Activated CD4-positive, alpha-beta T cell treated with anti-CD3 and anti-CD28 coated beads for 36 hours (primary cell): ENCODE measurements at regions of chr17 and their contacts with region 1.

Region 1: DNA sequence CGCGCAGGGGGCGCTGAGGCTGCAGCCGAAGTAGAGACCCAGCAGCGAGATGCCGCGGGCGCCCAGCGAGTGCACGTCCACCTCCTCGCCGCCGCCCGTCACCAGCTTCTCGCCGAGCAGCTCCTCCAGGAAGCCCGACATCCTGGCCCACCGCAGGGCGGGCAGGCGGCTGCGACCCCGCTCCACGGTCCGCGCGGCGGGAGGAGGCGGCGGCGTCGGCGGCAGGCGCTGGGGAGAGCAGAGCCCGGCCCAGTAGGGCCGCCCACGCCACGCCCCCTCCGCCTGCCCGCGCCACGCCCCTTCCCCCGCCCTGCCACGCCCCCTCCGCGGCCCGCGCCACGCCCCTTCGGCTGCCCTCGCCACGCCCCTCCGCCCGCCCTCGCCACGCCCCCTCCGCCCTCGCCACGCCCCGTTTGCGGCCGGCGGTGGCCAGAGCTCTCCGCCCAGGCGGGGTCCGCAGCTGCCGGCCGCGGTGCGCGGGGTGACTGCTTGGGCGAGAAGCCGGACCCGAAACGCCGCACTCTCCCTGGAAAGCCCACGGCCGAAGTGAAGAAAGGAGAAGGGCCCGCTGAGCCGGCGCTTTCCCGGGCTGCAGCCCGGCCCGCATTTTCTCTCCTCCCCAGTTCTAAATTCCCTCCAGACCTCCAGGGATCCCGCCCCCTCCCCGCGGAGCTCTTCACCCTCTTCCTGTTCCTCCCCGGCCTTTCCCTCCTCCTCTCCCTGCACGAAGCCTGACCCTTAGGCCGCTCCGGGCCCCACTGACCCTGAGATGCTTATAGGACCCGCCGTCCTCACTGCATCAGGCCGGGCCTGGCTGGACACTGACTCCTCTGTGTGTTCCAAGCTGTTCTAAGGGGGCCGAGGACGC is at the start of gene NXN:
- DNase-seq: peak; percentile 94
- ATAC-seq: peak; percentile 78
- H3K4me3 Mint-ChIP-seq: peak within 1 kb of the TSS; percentile 67
- H3K27ac Mint-ChIP-seq: no peak within 1 kb of the TSS
- H3K4me1 Mint-ChIP-seq: peaks cover 15% of the 10 kb centered on the region
- H3K27me3 Mint-ChIP-seq: peaks cover 26% of the 10 kb centered on the region
- total RNA-seq, gene NXN: 0.93 to 1.4 TPM

Region 2: DNA sequence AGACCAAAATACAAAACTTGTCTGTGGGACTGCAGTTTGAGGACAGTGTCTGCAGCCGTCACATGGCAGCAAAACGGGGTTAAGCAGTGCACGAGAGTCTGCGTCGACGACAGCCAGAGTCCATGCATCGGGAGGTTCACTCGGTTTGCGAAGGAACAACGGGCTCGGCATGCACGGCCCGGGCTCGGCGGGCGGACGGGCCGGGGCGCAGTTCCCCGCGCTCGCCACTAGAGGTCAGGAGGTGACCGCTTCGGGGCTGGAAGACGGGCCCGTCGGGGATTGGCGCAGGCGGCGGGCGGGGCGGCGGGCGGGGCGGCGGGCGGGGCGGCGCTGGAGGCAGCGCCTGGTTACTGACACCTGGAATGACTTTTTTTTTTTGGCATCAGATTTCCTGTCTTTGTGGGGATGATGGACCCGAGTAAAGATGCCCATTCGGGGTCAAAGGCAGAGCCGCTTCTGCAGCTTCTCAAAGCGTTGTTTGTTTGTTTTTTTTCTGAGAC is 835.9 kb before region 1 on chr17:
- CTCF ChIA-PET with region 1: no interaction called
- POLR2A ChIA-PET with region 1: no interaction called
- intact Hi-C with region 1: loop called in 1 of 2 experiments (anchors 5 kb)
- DNase-seq: peak; percentile 93
- ATAC-seq: peak; percentile 87
- H3K4me3 Mint-ChIP-seq: no peak overlapping the region
- H3K27ac Mint-ChIP-seq: no peak overlapping the region
- H3K4me1 Mint-ChIP-seq: no peaks in the 10 kb centered on the region
- H3K27me3 Mint-ChIP-seq: no peaks in the 10 kb centered on the region

Region 3: GRCh38 chr17:716238-716637 is 263.5 kb before region 1 on chr17:
- CTCF ChIA-PET with region 1: interaction called, 4 read pairs
- POLR2A ChIA-PET with region 1: no interaction called
- intact Hi-C with region 1: loop called in 1 of 2 experiments (anchors 1 kb)
- DNase-seq: no peak
- ATAC-seq: no peak
- H3K4me3 Mint-ChIP-seq: no peak overlapping the region
- H3K27ac Mint-ChIP-seq: no peak overlapping the region
- H3K4me1 Mint-ChIP-seq: peaks cover 26% of the 10 kb centered on the region
- H3K27me3 Mint-ChIP-seq: no peaks in the 10 kb centered on the region

Region 4: GRCh38 chr17:752002-752619 is 227.7 kb before region 1 on chr17 and contains the start of gene GEMIN4:
- CTCF ChIA-PET with region 1: interaction called, 4 read pairs
- POLR2A ChIA-PET with region 1: interaction called, 3 read pairs
- intact Hi-C with region 1: loop called in 1 of 2 experiments (anchors 1 kb)
- DNase-seq: peak; percentile 99
- ATAC-seq: peak; percentile 86
- H3K4me3 Mint-ChIP-seq: peak within 1 kb of the TSS; percentile 99
- H3K27ac Mint-ChIP-seq: peak within 1 kb of the TSS; percentile 97
- H3K4me1 Mint-ChIP-seq: peaks cover 32% of the 10 kb centered on the region
- H3K27me3 Mint-ChIP-seq: no peaks in the 10 kb centered on the region
- total RNA-seq, gene GEMIN4: 49.7 to 56.1 TPM

Region 5: DNA sequence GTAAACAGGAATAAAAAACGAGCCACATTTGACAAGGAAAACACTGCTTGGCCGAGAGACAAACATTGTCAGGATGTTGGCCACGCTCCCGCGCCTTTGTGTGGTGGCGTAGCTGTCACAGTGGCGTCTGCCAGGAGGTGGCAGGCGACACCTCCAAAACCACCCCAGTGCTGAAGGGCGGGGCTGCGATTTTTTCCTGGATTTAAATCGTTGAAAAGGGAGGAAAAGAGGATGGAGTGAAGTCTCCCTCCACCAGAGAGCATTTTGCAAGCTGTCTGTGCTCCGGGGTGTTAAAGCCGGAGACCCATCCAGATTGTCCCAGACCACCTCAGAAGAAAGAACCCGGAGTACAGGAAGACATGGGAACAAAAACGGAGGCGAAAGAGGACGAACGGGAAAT is 184.9 kb before region 1 on chr17:
- CTCF ChIA-PET with region 1: interaction called, 48 read pairs
- POLR2A ChIA-PET with region 1: interaction called, 3 read pairs
- intact Hi-C with region 1: loop called (anchors 1 kb)
- DNase-seq: peak; percentile 73
- ATAC-seq: peak; percentile 80
- H3K4me3 Mint-ChIP-seq: no peak overlapping the region
- H3K27ac Mint-ChIP-seq: no peak overlapping the region
- H3K4me1 Mint-ChIP-seq: peaks cover 6% of the 10 kb centered on the region
- H3K27me3 Mint-ChIP-seq: no peaks in the 10 kb centered on the region

Region 6: GRCh38 chr17:951325-952132 is 28.2 kb before region 1 on chr17:
- CTCF ChIA-PET with region 1: no interaction called
- POLR2A ChIA-PET with region 1: no interaction called
- intact Hi-C with region 1: no loop called
- DNase-seq: no peak
- ATAC-seq: no peak
- H3K4me3 Mint-ChIP-seq: no peak overlapping the region
- H3K27ac Mint-ChIP-seq: no peak overlapping the region
- H3K4me1 Mint-ChIP-seq: no peaks in the 10 kb centered on the region
- H3K27me3 Mint-ChIP-seq: peaks cover 9% of the 10 kb centered on the region

Region 7: GRCh38 chr17:1043601-1044251 is 64.0 kb after region 1 on chr17:
- CTCF ChIA-PET with region 1: no interaction called
- POLR2A ChIA-PET with region 1: no interaction called
- intact Hi-C with region 1: no loop called
- DNase-seq: no peak
- ATAC-seq: no peak
- H3K4me3 Mint-ChIP-seq: no peak overlapping the region
- H3K27ac Mint-ChIP-seq: no peak overlapping the region
- H3K4me1 Mint-ChIP-seq: no peaks in the 10 kb centered on the region
- H3K27me3 Mint-ChIP-seq: no peaks in the 10 kb centered on the region

Region 8: DNA sequence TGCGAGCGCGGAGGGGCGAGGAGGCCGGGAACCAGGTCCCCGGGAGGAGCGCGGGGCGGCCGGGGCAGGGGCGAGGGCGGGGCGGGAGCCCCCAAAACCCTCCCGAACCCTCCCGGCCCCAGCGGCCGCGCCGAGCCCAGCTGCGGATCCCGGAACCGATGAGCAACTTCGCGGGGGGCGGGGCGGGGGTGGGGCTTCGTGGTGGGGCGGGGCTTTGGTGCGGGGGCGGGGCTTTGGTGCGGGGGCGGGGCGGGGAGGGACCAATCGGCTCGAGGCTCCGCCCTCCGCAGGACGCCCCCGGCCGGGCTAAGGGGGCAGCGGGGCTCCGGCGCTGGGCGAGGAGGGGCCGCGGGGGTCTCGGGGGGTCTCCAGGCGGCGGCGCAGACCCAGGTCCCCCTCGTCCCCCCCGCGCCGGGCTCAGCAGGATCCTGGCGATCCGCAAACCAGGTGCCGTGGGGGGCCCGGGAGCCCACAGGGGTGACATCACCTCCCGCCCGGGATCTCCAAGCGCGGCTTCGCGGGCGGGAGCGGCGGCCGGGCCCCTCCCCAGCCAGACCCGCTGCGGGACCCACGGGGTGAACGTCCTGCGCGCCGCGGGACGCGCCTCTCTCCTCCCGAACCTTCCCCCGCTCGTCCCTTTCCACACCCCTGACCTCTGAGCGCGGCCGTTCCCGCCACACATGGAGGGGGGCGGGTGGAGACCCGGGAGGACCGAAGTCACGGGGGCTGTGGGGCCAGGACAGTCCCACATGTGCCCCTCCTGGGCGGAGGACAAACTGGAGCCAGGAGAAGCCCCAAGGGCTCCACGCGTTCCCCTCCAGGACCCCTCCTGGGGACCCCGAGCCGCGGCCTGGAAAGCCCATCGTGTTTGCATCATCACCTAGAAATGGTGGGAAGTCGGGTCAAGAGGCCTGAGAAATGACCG is 200.3 kb after region 1 on chr17 and contains the start of gene ABR:
- CTCF ChIA-PET with region 1: no interaction called
- POLR2A ChIA-PET with region 1: no interaction called
- intact Hi-C with region 1: loop called in 1 of 2 experiments (anchors 1 kb)
- DNase-seq: peak; percentile 74
- ATAC-seq: peak; percentile 54
- H3K4me3 Mint-ChIP-seq: peak within 1 kb of the TSS; percentile 59
- H3K27ac Mint-ChIP-seq: no peak within 1 kb of the TSS
- H3K4me1 Mint-ChIP-seq: peaks cover 10% of the 10 kb centered on the region
- H3K27me3 Mint-ChIP-seq: peaks cover 4% of the 10 kb centered on the region
- total RNA-seq, gene ABR: 45.2 to 50.5 TPM